ENCODE measurements at regions of chr1 and their contacts with region 1.

Region 1: GRCh38 chr1:47997289-47998200 is at the start of gene TRABD2B:
- DNase-seq: peak; percentile 71
- total RNA-seq, gene TRABD2B: 0.13 TPM in 1 of 2 replicates, not detected in the other

Region 2: DNA sequence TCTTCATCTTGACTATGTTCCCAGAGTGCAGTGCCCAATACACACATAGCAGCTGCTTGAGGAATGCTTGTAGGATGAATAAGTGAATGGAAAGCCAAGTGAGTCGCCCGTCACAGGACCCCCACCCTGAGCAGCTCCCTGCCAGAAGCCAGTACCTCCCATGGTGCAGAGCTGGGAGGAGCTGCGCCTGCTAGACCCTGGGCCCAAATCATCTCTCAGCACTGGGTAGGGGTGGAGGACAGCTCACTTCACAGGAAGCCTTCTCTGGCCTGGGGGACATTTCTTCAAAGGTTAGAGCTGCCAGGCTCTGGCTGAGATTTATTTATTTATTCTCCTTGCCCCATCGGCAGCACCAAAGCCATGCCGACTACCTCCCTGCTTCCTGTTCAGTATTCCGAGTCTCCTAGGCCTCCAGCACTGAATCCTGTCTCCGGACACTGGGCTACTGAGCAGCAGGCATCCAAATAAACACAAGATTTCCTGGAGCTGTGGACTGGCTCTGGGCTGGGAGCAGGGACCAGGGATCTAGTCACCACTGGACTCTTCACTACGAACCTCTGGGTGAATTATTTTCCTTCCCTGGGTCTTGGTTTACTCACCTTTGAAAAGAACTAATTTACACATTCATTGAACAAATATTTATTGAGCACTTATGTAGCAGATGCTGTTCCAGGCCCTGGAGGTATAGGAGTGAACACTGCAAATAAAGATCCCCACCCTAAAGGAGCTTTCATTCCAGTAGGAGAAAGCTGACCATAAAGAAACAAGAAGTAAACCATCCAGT is 188.1 kb before region 1 on chr1:
- in situ Hi-C with region 1: no loop called
- DNase-seq: no peak

Region 3: GRCh38 chr1:47893412-47893811 is 104.1 kb before region 1 on chr1:
- in situ Hi-C with region 1: no loop called
- DNase-seq: no peak

Region 4: GRCh38 chr1:48061162-48062136 is 63.9 kb after region 1 on chr1:
- in situ Hi-C with region 1: loop called (anchors 10 kb)
- DNase-seq: peak; percentile 76